Activated CD4-positive, alpha-beta memory T cell treated with anti-CD3 and anti-CD28 coated beads for 36 hours (primary cell): ENCODE measurements at regions of chr22 and their contacts with region 1.

Region 1: DNA sequence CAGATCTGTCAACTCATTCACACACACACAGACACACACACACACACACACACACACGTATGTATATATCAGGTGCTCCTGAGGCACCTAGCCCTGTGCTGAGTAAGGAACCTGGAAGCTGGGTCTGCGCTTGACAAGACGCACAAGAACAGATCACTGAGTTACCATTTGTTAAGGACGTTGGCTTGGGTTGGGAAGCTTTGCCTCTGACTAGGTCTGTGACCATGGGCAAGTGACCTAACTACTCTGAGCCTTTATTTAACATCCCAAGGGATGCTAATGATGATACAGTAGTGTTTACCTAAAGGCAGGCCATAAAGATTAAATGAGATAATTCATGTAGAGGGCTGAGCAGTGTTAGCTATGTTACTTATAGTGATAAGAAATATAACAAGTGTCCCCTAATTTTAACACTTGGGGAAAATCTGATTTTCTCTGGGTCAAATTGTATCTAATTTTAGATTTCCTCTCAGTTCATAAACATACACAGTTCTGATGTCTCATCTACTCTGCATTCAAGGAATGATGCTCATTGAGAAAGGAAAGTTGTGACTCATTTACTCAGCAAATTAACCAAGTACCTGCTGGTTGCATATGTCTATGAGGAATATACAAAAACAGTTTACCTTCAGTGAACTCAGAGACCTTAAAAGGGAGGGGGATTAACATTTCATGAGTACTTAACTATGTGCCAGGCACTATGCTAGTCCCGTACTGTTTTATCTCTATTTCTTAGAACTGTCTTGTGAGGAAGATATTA is 13.6 kb downstream of the RNF185 start:
- DNase-seq: peak; percentile 13
- H3K4me3 Mint-ChIP-seq: peak overlapping the region; percentile 17
- H3K27ac Mint-ChIP-seq: peak overlapping the region; percentile 88
- H3K4me1 Mint-ChIP-seq: peaks cover 28% of the 10 kb centered on the region
- H3K27me3 Mint-ChIP-seq: no peaks in the 10 kb centered on the region

Region 2: GRCh38 chr22:31160328-31160978 is 13.1 kb before region 1 on chr22:
- CTCF ChIA-PET with region 1: interaction called, 3 read pairs
- POLR2A ChIA-PET with region 1: interaction called, 4 read pairs
- intact Hi-C with region 1: loop called (anchors 1 kb)
- DNase-seq: peak; percentile 29
- H3K4me3 Mint-ChIP-seq: peak overlapping the region; percentile 99
- H3K27ac Mint-ChIP-seq: peak overlapping the region; percentile 97
- H3K4me1 Mint-ChIP-seq: peaks cover 34% of the 10 kb centered on the region
- H3K27me3 Mint-ChIP-seq: no peaks in the 10 kb centered on the region